Activated T-helper 1 cell treated with anti-CD3 and anti-CD28 coated beads, Interleukin-12 subunit alpha, Interleukin-12 subunit beta, Interleukin-2, Interleukin-4 antibody, amounts not matched to agents 30 ng/mL and 10 ng/mL and 1 ng/mL, durations not matched to agents 14 hours and 24 hours and 36 hours (primary cell): ENCODE measurements at regions of chr6 and their contacts with region 1.

Region 1: DNA sequence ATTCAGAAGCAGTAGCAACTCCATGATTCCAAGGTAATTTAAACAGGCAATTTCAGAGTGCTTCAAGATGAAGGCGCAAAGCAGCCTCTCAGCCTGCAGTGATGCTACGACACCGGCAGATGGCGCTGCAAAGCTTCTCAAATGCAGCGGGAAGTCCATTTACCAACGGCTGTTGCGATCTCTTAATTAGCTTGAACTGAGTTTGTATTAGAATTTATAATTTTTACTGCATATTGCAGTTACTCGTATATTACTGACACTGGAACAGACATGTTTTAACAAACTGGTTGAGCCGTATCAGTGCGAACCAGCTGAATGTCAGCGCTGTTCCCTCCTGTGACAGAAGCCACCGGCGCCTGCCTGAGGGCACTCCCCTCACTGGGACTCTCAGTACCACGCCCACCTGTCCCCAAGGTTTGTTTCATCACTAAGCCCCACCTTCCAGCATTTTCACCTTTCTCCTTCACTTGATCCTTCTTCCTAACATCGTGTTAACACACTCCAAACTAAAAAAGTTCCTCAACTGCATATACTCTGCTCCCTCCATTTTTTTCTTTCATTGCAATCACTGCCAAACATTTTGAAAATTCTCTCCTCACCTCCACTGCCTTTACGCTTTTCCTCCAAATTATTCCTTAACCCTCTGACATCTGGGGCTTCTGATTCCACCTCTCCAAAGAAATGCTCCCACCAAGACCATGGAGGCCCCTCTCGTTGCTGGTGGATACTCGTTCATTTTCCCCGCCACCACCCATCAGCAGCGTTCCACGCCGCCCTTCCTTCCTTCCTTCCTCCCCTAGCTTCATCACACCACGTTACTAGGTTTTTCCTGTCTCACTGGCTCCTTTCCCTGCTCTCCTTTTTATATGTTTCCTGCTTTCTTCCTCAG is 14.5 kb downstream of the GNL1 start:
- DNase-seq: peak; percentile 69
- H3K4me3 Mint-ChIP-seq: peak overlapping the region; percentile 81
- H3K27ac Mint-ChIP-seq: peak overlapping the region; percentile 78
- H3K4me1 Mint-ChIP-seq: peaks cover 39% of the 10 kb centered on the region
- H3K27me3 Mint-ChIP-seq: no peaks in the 10 kb centered on the region

Region 2: GRCh38 chr6:30483677-30484279 is 58.0 kb before region 1 on chr6:
- intact Hi-C with region 1: loop called (anchors 1 kb)
- DNase-seq: no peak
- H3K4me3 Mint-ChIP-seq: no peak overlapping the region
- H3K27ac Mint-ChIP-seq: no peak overlapping the region
- H3K4me1 Mint-ChIP-seq: peaks cover 44% of the 10 kb centered on the region
- H3K27me3 Mint-ChIP-seq: peaks cover 40% of the 10 kb centered on the region

Region 3: DNA sequence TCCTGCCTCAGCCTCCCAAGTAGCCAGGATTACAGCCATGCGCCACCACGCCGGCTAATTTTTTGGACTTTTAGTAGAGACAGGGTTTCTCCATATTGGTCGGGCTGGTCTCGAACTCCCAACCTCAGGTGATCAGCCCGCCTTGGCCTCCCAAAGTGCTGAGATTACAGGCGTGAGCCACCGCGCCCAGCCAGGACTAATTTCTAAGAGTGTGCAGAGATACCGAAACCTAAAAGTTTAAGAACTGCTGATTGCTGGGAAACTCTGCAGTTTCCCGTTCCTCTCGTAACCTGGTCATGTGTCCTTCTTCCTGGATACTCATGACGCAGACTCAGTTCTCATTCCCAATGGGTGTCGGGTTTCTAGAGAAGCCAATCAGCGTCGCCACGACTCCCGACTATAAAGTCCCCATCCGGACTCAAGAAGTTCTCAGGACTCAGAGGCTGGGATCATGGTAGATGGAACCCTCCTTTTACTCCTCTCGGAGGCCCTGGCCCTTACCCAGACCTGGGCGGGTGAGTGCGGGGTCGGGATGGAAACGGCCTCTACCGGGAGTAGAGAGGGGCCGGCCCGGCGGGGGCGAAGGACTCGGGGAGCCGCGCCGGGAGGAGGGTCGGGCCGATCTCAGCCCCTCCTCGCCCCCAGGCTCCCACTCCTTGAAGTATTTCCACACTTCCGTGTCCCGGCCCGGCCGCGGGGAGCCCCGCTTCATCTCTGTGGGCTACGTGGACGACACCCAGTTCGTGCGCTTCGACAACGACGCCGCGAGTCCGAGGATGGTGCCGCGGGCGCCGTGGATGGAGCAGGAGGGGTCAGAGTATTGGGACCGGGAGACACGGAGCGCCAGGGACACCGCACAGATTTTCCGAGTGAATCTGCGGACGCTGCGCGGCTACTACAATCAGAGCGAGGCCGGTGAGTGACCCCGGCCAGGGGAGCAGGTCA is 52.4 kb before region 1 on chr6 and contains the start of gene HLA-E:
- intact Hi-C with region 1: loop called (anchors 1 kb)
- DNase-seq: peak; percentile 91
- H3K4me3 Mint-ChIP-seq: peak within 1 kb of the TSS; percentile 97
- H3K27ac Mint-ChIP-seq: peak within 1 kb of the TSS; percentile 99
- H3K4me1 Mint-ChIP-seq: peaks cover 64% of the 10 kb centered on the region
- H3K27me3 Mint-ChIP-seq: peaks cover 3% of the 10 kb centered on the region
- total RNA-seq, gene HLA-E: 476 and 483 TPM in 2 replicates

Region 4: DNA sequence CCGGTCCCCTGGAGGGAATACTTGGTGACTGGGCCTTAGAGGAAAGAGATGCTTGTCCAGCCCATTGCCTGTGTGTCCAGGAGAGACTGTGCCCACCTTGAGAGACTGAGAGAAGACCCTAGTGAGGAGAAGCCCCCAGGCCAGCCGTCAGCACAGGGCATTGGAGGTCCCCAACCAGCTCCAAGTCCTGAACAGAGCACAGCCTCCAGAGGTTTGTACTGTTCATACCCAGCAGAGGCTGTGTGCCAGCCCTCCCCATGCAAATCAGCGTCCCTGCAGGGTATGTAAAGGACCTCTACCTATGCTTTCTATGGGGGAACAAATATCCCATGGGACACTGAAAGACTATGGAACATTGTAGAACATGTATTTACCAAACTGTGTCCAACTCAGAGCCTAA is 44.0 kb before region 1 on chr6:
- intact Hi-C with region 1: loop called (anchors 1 kb)
- DNase-seq: no peak
- H3K4me3 Mint-ChIP-seq: no peak overlapping the region
- H3K27ac Mint-ChIP-seq: no peak overlapping the region
- H3K4me1 Mint-ChIP-seq: peaks cover 59% of the 10 kb centered on the region
- H3K27me3 Mint-ChIP-seq: no peaks in the 10 kb centered on the region

Region 5: GRCh38 chr6:30515932-30516753 is 25.6 kb before region 1 on chr6:
- intact Hi-C with region 1: loop called (anchors 1 kb)
- DNase-seq: peak; percentile 88
- H3K4me3 Mint-ChIP-seq: peak overlapping the region; percentile 83
- H3K27ac Mint-ChIP-seq: peak overlapping the region; percentile 97
- H3K4me1 Mint-ChIP-seq: peaks cover 49% of the 10 kb centered on the region
- H3K27me3 Mint-ChIP-seq: no peaks in the 10 kb centered on the region

Region 6: GRCh38 chr6:30571075-30571768 is 29.5 kb after region 1 on chr6 and contains the start of gene ABCF1:
- intact Hi-C with region 1: loop called (anchors 1 kb)
- DNase-seq: peak; percentile 100
- H3K4me3 Mint-ChIP-seq: peak within 1 kb of the TSS; percentile 98
- H3K27ac Mint-ChIP-seq: peak within 1 kb of the TSS; percentile 98
- H3K4me1 Mint-ChIP-seq: peaks cover 62% of the 10 kb centered on the region
- H3K27me3 Mint-ChIP-seq: no peaks in the 10 kb centered on the region
- total RNA-seq, gene ABCF1: 115 and 120 TPM in 2 replicates

Region 7: DNA sequence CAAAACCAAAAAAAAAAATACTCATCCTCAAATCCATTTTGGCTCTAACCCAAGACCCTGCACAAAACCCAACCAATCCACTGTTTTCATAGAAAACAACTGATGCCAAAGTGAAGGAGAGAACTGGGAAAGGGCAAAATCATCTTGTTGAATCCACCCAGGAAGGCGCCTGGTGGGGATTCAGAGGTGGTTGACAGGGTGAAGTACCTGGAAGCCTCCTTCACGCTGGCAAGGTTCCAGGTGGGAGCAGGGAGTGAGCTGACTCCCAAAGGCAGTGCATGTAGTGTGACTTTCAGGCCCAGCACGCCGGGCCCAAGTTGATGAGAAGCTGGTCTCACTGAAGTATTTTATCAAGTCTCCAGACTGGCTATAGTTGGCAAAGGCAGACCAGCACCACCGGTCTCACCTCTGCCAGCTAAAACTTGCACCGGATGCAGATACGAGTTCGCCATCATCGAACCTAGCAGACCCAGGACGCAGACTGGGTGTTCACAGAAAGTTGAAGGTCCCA is 58.7 kb after region 1 on chr6:
- intact Hi-C with region 1: loop called (anchors 1 kb)
- DNase-seq: no peak
- H3K4me3 Mint-ChIP-seq: no peak overlapping the region
- H3K27ac Mint-ChIP-seq: no peak overlapping the region
- H3K4me1 Mint-ChIP-seq: peaks cover 18% of the 10 kb centered on the region
- H3K27me3 Mint-ChIP-seq: no peaks in the 10 kb centered on the region

Region 8: GRCh38 chr6:31203345-31203979 is 661.7 kb after region 1 on chr6:
- intact Hi-C with region 1: no loop called
- DNase-seq: peak; percentile 54
- H3K4me3 Mint-ChIP-seq: peak overlapping the region; percentile 90
- H3K27ac Mint-ChIP-seq: peak overlapping the region; percentile 95
- H3K4me1 Mint-ChIP-seq: peaks cover 54% of the 10 kb centered on the region
- H3K27me3 Mint-ChIP-seq: no peaks in the 10 kb centered on the region